Left cardiac atrium (tissue), 4 donors: ENCODE measurements at regions of chr10 and their contacts with region 1.

Region 1: DNA sequence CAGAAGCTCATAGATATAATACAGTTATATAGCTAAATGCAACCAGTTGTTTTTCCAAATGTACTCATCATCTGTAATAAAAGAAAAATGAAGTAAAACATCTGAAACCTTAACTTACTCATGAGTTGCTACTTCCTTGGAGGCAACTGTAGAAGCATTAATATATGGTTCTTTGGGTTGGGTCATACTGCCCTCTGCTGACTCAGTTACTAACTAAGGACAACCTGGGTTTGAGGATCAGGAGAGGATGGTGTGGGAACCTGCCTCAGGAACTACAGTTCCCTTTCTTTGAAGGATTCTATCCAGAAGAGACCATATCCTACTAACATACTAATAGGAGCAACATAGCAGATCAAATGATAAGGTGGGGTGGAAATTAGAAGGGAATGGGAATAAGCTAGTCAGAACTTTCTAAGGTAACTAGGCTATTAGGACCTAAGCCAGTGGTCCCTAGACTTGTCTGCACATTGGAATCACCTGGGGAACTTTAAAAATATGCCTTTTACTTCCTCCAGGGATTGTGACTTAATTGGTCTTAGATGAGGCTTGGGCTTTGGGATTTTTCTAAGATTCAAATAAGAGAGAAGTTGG is 20.7 kb downstream of the COX15 start:
- DNase-seq: no peak
- ATAC-seq: peak; percentile 64 to 67

Region 2: DNA sequence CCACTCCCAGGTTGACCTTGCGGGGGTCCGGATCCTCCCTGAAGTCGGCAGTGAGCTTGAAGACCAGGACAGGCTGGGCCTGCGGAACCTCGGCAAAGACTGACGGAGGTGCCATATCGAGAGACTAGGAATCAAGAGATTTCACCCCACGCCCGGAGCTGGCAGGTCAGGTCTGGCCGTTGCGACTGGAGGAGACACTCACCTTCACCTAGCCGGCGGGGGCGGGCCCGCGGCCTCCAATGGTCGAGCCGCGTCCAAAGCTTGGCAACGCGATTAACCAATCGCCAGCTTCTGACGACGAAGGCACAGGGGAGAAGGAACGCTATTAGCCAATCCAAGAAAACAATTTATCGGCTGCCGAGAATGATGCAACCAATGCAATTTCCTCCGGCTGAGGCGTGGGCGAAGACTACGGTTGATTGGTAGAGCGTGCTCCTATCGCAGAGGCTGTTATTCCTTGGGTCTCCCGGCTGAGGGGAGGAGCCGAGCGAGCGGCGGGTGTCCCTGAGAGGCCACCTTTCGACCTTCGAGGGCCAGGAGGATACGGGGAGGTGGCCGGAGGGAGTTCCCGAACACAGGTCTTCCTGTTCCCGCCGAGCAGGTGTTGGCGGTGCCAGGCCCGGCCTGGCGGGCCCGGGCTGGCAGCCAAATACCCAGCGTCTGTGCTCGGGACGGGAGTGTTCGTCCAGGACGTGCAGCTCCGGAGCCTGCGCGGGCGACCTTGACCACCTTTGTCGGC is 280.6 kb before region 1 on chr10 and contains the start of gene GOT1:
- intact Hi-C with region 1: loop called in 1 of 2 experiments (anchors 10 kb)
- DNase-seq: peak; percentile 96
- ATAC-seq: peak; percentile 97 to 99
- total RNA-seq, gene GOT1: 404 to 437 TPM

Region 3: GRCh38 chr10:99620713-99621453 is 90.3 kb before region 1 on chr10:
- intact Hi-C with region 1: loop called (anchors 10 kb)
- DNase-seq: peak; percentile 96
- ATAC-seq: peak; percentile 93 to 95